GM12878 (cell line): ENCODE measurements at regions of chr11 and their contacts with region 1.

Region 1: GRCh38 chr11:59158206-59159068 is 13.5 kb upstream of the DTX4 start:
- DNase-seq: no peak
- ATAC-seq: peak; percentile 98
- H3K4me3 ChIP-seq: no peak overlapping the region
- H3K27ac ChIP-seq: no peak overlapping the region
- H3K4me1 ChIP-seq: peaks cover 2% of the 10 kb centered on the region
- H3K27me3 ChIP-seq: no peaks in the 10 kb centered on the region
- CTCF ChIP-seq: peak; percentile 74 to 97 (median 92); a peak in 5 of 6 replicates
- EP300 ChIP-seq: no peak
- POLR2A ChIP-seq: no peak
- RAD21 ChIP-seq: peak; percentile 91

Region 2: DNA sequence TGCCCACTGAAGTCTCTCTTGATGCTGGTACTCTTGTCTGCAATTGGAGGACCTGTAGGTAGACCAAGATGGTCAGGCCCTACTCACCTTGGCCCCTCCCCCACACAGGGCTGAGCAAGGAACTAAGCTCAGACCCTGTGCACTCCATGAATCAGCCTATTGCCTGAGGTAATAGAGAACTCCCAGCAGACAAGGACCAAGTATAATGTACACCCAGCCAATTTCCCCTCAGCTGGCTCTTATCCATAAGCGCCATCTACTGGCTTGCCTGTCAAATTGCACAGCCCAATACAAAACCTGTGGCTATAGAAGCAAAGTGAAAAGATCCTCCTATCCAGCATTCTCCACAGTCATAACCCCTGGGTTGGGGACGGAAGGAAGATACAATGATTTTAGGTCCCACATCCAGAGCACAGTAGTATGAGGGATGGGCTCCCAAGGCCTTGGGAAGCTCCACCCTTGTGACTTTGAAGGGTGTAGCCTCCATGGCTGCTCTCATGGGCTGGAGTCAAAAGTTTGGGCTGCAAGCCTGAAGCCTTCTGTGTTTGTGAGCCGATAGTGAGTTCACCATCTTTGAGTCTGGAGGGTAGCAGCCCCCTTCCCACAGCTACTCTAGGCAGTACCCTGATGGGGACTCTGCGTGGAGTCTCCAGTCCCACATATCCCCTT is 369.9 kb before region 1 on chr11:
- CTCF ChIA-PET with region 1: interaction called, 3 read pairs
- POLR2A ChIA-PET with region 1: no interaction called
- RAD21 ChIA-PET with region 1: interaction called, 3 read pairs
- SMC1A ChIA-PET with region 1: interaction called, 4 read pairs
- in situ Hi-C with region 1: no loop called
- intact Hi-C with region 1: loop called (anchors 1 kb)
- DNase-seq: peak; percentile 7
- ATAC-seq: peak; percentile 98
- H3K4me3 ChIP-seq: no peak overlapping the region
- H3K27ac ChIP-seq: no peak overlapping the region
- H3K4me1 ChIP-seq: no peaks in the 10 kb centered on the region
- H3K27me3 ChIP-seq: no peaks in the 10 kb centered on the region; a peak in 1 of 4 replicates
- CTCF ChIP-seq: peak; percentile 88 to 94 (median 88); a peak in 5 of 6 replicates
- EP300 ChIP-seq: no peak
- POLR2A ChIP-seq: no peak
- RAD21 ChIP-seq: peak; percentile 94

Region 3: GRCh38 chr11:58958500-58958899 is 199.9 kb before region 1 on chr11:
- CTCF ChIA-PET with region 1: interaction called, 13 read pairs
- POLR2A ChIA-PET with region 1: no interaction called
- RAD21 ChIA-PET with region 1: interaction called, 4 read pairs
- SMC1A ChIA-PET with region 1: interaction called, 5 read pairs
- in situ Hi-C with region 1: no loop called
- intact Hi-C with region 1: loop called (anchors 1 kb)
- DNase-seq: peak; percentile 2
- ATAC-seq: peak; percentile 92
- H3K4me3 ChIP-seq: no peak overlapping the region
- H3K27ac ChIP-seq: no peak overlapping the region
- H3K4me1 ChIP-seq: peaks cover 3% of the 10 kb centered on the region; the same call in 1 of the 2 replicates
- H3K27me3 ChIP-seq: no peaks in the 10 kb centered on the region
- CTCF ChIP-seq: peak; percentile 46 to 60 (median 51)
- EP300 ChIP-seq: no peak
- POLR2A ChIP-seq: no peak
- RAD21 ChIP-seq: peak; percentile 53

Region 4: DNA sequence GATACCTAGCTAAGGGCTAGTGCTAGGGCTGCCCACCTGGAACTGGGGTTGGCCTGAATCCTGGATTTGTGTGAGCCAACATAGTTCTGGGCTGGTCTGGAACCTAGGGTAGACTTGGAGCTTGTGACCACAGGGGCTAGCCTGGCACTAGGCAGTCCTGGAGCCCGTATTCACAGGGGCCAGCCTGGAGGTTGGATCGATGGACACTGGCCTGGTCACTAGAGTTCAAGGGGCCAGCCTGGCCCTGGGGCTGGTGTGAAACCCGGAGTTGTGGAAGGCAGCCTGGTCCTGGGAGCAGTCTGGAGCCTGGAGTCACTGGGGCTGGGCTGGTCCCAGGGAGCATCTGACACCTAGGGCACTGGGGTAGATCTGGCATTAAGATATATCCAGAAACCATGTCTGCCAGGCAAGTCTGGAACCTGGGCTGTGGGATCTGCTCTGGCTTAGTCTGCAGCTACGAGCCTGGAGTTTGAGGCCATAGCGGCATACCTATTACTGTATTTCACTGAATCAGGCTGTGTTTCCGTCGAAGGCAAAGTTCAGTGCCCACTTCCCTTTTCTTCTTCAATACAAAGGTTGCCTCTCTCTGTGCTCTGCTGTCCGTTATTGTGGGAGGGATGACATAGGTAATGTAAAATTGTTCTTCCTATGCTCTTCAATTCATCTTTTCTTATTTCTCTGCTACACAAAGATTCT is 81.4 kb before region 1 on chr11:
- CTCF ChIA-PET with region 1: interaction called, 15 read pairs
- POLR2A ChIA-PET with region 1: no interaction called
- RAD21 ChIA-PET with region 1: interaction called, 3 read pairs
- SMC1A ChIA-PET with region 1: interaction called, 6 read pairs
- in situ Hi-C with region 1: no loop called
- intact Hi-C with region 1: no loop called
- DNase-seq: no peak
- ATAC-seq: peak; percentile 97
- H3K4me3 ChIP-seq: no peak overlapping the region
- H3K27ac ChIP-seq: no peak overlapping the region
- H3K4me1 ChIP-seq: peaks cover 27% of the 10 kb centered on the region
- H3K27me3 ChIP-seq: no peaks in the 10 kb centered on the region
- CTCF ChIP-seq: no peak
- EP300 ChIP-seq: no peak
- POLR2A ChIP-seq: no peak
- RAD21 ChIP-seq: no peak

Region 5: GRCh38 chr11:59135648-59136461 is 22.6 kb before region 1 on chr11:
- CTCF ChIA-PET with region 1: interaction called, 250 read pairs
- POLR2A ChIA-PET with region 1: no interaction called
- RAD21 ChIA-PET with region 1: interaction called, 56 read pairs
- SMC1A ChIA-PET with region 1: interaction called, 27 read pairs
- in situ Hi-C with region 1: no loop called
- intact Hi-C with region 1: no loop called
- DNase-seq: peak; percentile 40
- ATAC-seq: peak; percentile 100
- H3K4me3 ChIP-seq: no peak overlapping the region
- H3K27ac ChIP-seq: no peak overlapping the region
- H3K4me1 ChIP-seq: no peaks in the 10 kb centered on the region
- H3K27me3 ChIP-seq: no peaks in the 10 kb centered on the region
- CTCF ChIP-seq: peak; percentile 99 to 100 (median 100); a peak in 5 of 6 replicates
- EP300 ChIP-seq: no peak
- POLR2A ChIP-seq: no peak
- RAD21 ChIP-seq: peak; percentile 99

Region 6: GRCh38 chr11:59186130-59186594 is 27.7 kb after region 1 on chr11:
- CTCF ChIA-PET with region 1: interaction called, 27 read pairs
- POLR2A ChIA-PET with region 1: no interaction called
- RAD21 ChIA-PET with region 1: interaction called, 4 read pairs
- SMC1A ChIA-PET with region 1: interaction called, 5 read pairs
- in situ Hi-C with region 1: no loop called
- intact Hi-C with region 1: no loop called
- DNase-seq: no peak
- ATAC-seq: peak; percentile 88
- H3K4me3 ChIP-seq: no peak overlapping the region
- H3K27ac ChIP-seq: no peak overlapping the region
- H3K4me1 ChIP-seq: peaks cover 10% of the 10 kb centered on the region
- H3K27me3 ChIP-seq: no peaks in the 10 kb centered on the region
- CTCF ChIP-seq: peak; percentile 67 to 92 (median 89)
- EP300 ChIP-seq: no peak
- POLR2A ChIP-seq: no peak
- RAD21 ChIP-seq: peak; percentile 46

Region 7: GRCh38 chr11:59429924-59430516 is 271.6 kb after region 1 on chr11:
- CTCF ChIA-PET with region 1: interaction called, 16 read pairs
- POLR2A ChIA-PET with region 1: no interaction called
- RAD21 ChIA-PET with region 1: interaction called, 10 read pairs
- SMC1A ChIA-PET with region 1: interaction called, 7 read pairs
- in situ Hi-C with region 1: no loop called
- intact Hi-C with region 1: no loop called
- DNase-seq: peak; percentile 61
- ATAC-seq: peak; percentile 94
- H3K4me3 ChIP-seq: no peak overlapping the region
- H3K27ac ChIP-seq: no peak overlapping the region
- H3K4me1 ChIP-seq: no peaks in the 10 kb centered on the region
- H3K27me3 ChIP-seq: peaks cover 0 to 4% of the 10 kb centered on the region in 2 experiments; a peak in 1 of 4 replicates
- CTCF ChIP-seq: peak; percentile 70 to 82 (median 78)
- EP300 ChIP-seq: no peak
- POLR2A ChIP-seq: no peak
- RAD21 ChIP-seq: peak; percentile 92